Mammary epithelial cell (primary cell): ENCODE measurements at regions of chr21 and their contacts with region 1.

Region 1: DNA sequence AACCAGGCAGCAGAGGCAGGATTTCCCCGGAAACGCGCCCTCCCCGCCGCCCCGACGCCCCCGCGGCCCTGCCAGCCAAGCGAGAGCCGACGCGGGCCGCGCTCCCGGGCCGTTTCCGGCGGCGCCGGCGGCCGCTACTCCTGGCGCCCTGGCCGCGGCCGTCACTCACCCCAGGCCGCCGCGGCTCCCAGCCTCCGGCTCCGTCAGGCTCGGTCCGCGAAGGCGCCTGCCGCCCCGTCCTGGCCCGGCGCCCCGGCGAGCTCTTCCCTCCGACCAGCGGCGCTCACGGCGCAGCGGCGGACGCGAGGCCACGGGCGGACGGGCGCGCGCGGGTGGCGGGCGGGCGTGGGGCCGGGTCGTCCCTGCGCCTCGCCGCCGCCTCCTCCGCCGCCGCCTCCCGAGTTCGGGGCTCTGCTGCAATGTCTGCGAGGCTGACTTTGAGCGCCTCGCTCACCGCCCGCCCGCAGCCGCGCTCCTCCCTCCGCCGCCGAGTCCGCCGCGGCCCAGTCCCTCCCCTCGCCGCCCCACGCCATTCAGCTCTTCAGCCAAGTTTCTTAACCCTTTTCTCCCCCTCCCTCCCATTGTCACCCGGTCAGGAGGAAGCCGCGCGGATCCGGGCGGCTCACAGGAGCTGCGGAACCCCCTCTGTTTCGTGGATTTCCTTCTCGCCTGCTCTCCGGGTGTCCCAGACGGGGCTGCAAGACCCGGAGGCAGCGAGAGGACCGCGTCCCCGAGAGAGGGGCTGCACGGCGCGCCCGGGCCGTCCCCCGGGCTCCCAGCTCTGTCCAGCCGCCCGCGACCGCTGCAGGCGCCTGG is at the start of gene NRIP1:
- DNase-seq: peak; percentile 90
- H3K4me3 ChIP-seq: peak within 1 kb of the TSS; percentile 80 to 87 (median 82)
- H3K27ac ChIP-seq: peak within 1 kb of the TSS; percentile 92
- H3K4me1 ChIP-seq: peaks cover 23% of the 10 kb centered on the region
- H3K27me3 ChIP-seq: no peaks in the 10 kb centered on the region
- CTCF ChIP-seq: no peak
- total RNA-seq, gene NRIP1: 40.8 to 73.7 TPM

Region 2: GRCh38 chr21:14382835-14383594 is 681.8 kb before region 1 on chr21 and contains the start of gene HSPA13:
- CTCF ChIA-PET with region 1: no interaction called
- dilution Hi-C with region 1: no loop called
- in situ Hi-C with region 1: no loop called
- intact Hi-C with region 1: loop called (anchors 10 kb)
- DNase-seq: peak; percentile 100
- H3K4me3 ChIP-seq: peak within 1 kb of the TSS; percentile 81 to 92 (median 86)
- H3K27ac ChIP-seq: peak within 1 kb of the TSS; percentile 80
- H3K4me1 ChIP-seq: peaks cover 18% of the 10 kb centered on the region
- H3K27me3 ChIP-seq: no peaks in the 10 kb centered on the region
- CTCF ChIP-seq: no peak
- total RNA-seq, gene HSPA13: 48.3 to 76.7 TPM

Region 3: DNA sequence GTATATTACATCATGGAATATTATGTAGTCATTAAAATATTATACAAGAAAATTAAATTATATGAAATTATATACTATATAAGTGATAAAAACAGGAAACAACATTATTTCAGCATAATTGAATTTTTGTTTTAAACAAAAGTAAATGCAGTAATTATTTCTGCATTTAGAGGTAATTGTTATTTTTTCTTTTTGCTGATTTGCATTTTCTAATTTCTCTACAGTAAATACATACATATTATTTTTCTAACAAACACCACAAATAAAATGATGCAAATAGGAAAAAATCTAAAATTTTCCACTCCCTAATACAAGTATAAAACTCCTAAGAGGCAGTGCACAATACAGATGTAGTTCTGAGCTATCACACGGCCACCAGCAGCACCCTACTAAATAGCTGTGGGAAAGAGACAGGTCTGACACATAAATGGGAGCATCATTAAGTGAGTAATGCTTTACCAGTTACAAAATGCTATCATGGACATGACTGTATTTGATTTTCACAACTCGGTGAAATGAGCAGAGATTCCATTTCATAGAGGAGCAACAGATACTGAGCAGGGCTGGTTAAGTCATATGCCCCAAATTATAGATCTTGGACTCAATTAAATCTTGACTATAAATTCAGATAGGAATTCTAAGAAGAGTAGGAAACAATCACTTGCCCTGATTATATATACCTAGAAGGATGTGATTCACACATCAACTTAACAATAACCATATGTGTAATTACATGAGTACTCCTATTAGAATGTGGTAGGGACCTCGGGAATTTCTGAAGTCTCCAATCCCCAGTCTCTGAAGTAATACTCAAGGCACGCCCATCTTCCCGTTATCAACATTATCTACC is 48.9 kb before region 1 on chr21:
- CTCF ChIA-PET with region 1: no interaction called
- dilution Hi-C with region 1: no loop called
- in situ Hi-C with region 1: no loop called
- intact Hi-C with region 1: loop called (anchors 5 kb)
- DNase-seq: peak; percentile 84
- H3K4me3 ChIP-seq: no peak overlapping the region
- H3K27ac ChIP-seq: peak overlapping the region; percentile 80
- H3K4me1 ChIP-seq: peaks cover 10% of the 10 kb centered on the region
- H3K27me3 ChIP-seq: no peaks in the 10 kb centered on the region
- CTCF ChIP-seq: no peak

Region 4: GRCh38 chr21:15164678-15165303 is 100.0 kb after region 1 on chr21:
- CTCF ChIA-PET with region 1: no interaction called
- dilution Hi-C with region 1: no loop called
- in situ Hi-C with region 1: no loop called
- intact Hi-C with region 1: no loop called
- DNase-seq: peak; percentile 79
- H3K4me3 ChIP-seq: no peak overlapping the region
- H3K27ac ChIP-seq: no peak overlapping the region
- H3K4me1 ChIP-seq: peaks cover 13% of the 10 kb centered on the region
- H3K27me3 ChIP-seq: no peaks in the 10 kb centered on the region
- CTCF ChIP-seq: no peak

Region 5: GRCh38 chr21:15241997-15242736 is 177.4 kb after region 1 on chr21:
- CTCF ChIA-PET with region 1: no interaction called
- dilution Hi-C with region 1: no loop called
- in situ Hi-C with region 1: no loop called
- intact Hi-C with region 1: loop called (anchors 1 kb)
- DNase-seq: peak; percentile 37
- H3K4me3 ChIP-seq: no peak overlapping the region
- H3K27ac ChIP-seq: no peak overlapping the region
- H3K4me1 ChIP-seq: peaks cover 27% of the 10 kb centered on the region
- H3K27me3 ChIP-seq: no peaks in the 10 kb centered on the region
- CTCF ChIP-seq: peak in 1 of 2 donors; percentile 39

Region 6: GRCh38 chr21:15483138-15483780 is 418.5 kb after region 1 on chr21:
- CTCF ChIA-PET with region 1: no interaction called
- dilution Hi-C with region 1: no loop called
- in situ Hi-C with region 1: loop called in 1 of 2 experiments (anchors 10 kb)
- intact Hi-C with region 1: loop called (anchors 1 kb)
- DNase-seq: peak; percentile 78
- H3K4me3 ChIP-seq: no peak overlapping the region
- H3K27ac ChIP-seq: no peak overlapping the region
- H3K4me1 ChIP-seq: peaks cover 4% of the 10 kb centered on the region
- H3K27me3 ChIP-seq: no peaks in the 10 kb centered on the region
- CTCF ChIP-seq: peak; percentile 90